Vagina (tissue), 2 donors: ENCODE measurements at regions of chr22 and their contacts with region 1.

Region 1: DNA sequence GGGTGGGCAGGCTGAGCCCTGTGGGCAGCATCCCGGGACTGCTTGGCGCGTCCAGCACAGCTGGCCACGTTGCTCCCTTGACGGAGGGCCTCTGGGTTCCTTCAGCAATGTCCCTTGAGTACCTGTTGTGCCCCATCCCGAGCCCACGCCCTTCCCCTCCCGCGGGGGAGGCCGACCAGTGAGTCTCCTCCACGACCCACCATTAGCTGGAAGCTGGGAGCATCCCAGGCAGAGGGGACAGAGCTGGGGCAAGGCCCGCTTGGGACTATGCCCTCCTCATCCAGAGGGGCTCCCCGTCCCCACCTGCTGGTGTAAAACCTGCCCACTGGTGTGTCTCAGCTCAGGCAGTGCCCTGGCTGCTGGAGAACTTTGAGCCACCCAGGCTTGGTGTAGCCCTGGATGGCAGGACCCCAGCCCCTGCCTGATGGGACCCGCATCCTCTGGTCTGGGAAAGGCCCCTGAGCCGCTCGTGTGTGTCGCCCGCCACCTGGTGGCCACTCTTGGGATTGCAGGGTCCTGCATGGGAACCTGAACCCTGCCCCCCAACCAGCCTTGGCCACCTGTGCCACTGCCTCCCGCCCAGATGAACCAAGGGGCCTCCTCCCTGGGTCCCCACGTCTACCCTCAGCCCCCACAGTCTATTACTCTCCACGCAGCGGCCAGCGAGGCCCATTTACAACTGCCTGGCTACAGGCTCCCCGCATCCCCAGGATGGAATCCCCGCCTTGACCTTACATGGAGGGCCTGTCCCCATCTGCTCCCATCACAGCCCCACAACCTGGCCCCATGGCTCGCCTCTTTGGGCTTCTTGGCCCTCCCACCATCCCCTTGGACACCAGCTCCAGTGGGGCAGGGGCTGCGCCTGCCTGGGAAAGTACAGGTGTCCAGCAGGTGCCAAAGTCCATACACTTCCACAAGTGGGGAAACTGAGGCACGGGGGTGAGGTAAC is 16.6 kb upstream of the ARHGAP8 start:
- DNase-seq: no peak
- H3K4me3 ChIP-seq: no peak overlapping the region
- H3K27ac ChIP-seq: no peak overlapping the region
- H3K4me1 ChIP-seq: peaks cover 5% of the 10 kb centered on the region
- H3K27me3 ChIP-seq: no peaks in the 10 kb centered on the region
- CTCF ChIP-seq: peak; percentile 97 to 100 (median 98)
- POLR2A ChIP-seq: no peak

Region 2: GRCh38 chr22:42919199-42919598 is 1816.6 kb before region 1 on chr22:
- intact Hi-C with region 1: no loop called
- DNase-seq: no peak
- H3K4me3 ChIP-seq: no peak overlapping the region
- H3K27ac ChIP-seq: no peak overlapping the region
- H3K4me1 ChIP-seq: peaks cover 41% of the 10 kb centered on the region
- H3K27me3 ChIP-seq: no peaks in the 10 kb centered on the region
- CTCF ChIP-seq: no peak
- POLR2A ChIP-seq: no peak

Region 3: DNA sequence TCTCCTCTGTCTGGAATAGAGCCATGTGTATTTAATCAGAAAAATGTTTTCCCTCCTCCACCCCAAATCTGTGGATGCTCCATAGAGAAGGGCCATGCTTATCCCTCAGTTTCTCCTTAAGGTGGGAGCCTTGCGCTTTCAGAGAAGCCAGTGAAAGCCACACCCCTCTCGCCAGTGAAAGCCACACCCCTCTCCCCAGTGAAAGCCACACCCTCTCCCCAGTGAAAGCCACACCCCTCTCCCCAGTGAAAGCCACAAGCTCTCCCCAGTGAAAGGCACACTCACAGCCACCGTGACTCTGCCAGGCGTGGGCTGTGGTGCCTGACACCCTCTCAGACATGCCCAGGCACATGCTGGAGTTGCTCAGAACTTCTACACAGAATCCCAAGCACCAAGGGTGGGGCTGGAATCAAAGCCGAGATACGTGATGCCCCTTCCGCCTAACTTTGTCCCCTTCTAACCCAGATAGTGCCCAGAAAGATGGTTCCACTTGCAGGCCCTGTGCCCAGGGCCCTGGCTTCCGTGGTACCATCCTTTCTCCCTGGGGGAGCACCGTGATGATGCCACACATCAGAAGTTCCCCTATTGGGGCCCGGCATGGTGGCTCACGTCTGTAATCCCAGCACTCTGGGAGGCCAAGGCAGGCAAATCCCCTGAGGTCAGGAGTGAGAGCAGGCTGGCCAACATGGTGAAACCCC is 50.3 kb before region 1 on chr22:
- intact Hi-C with region 1: loop called (anchors 2 kb)
- DNase-seq: no peak
- H3K4me3 ChIP-seq: no peak overlapping the region
- H3K27ac ChIP-seq: peak overlapping the region; percentile 71
- H3K4me1 ChIP-seq: peaks cover 19% of the 10 kb centered on the region
- H3K27me3 ChIP-seq: no peaks in the 10 kb centered on the region
- CTCF ChIP-seq: no peak
- POLR2A ChIP-seq: no peak